Caco-2 (cell line): ENCODE measurements at regions of chr20 and their contacts with region 1.

Region 1: DNA sequence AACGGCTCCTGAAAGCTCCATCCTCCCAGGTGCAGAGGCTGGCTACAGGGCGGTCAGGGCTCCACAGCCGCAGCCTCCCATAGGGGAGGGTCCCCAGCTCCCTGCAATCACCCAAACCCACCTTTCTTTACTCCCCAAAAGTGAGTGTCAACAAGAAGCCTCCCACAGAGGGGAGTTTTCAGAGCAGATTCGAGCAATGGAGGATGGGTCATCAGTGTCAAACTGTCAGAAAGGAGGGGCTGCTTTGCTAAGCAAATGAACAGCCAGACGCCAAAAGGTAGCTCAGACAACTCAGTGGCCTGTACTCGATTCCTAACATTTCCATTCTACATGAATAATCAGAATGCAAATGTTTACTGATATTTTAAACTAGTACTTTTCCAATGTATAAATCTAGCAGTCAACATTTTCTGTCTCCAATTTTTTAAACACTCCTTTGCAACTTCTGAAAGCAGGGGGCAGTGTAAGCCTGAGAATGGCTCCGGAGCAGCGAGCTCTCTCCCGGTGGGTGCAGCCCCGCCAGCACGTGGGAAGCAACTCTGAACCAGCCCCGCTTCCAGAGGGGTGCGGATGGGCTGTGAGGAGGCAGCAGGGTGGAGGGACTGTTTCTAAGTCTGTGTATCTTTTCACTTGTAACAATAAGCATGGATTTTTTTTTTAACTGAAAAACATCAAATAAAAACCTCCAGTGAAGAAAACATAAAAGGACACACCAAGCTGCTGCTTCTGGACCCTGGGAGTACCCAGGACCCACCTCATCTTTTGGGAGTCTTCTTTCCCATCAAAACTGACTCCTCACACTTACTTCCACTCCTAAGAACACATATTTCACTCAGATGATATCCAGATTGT is 54.9 kb downstream of the TAF4 start:
- DNase-seq: peak in 1 of 2 experiments; percentile 82
- H3K4me3 ChIP-seq: no peak overlapping the region
- H3K4me3 Mint-ChIP-seq: no peak overlapping the region
- H3K27ac Mint-ChIP-seq: peak overlapping the region; percentile 5
- H3K4me1 ChIP-seq: no peaks in the 10 kb centered on the region
- H3K4me1 Mint-ChIP-seq: no peaks in the 10 kb centered on the region
- H3K27me3 ChIP-seq: no peaks in the 10 kb centered on the region
- H3K27me3 Mint-ChIP-seq: no peaks in the 10 kb centered on the region
- CTCF ChIP-seq: peak; percentile 88 to 93

Region 2: DNA sequence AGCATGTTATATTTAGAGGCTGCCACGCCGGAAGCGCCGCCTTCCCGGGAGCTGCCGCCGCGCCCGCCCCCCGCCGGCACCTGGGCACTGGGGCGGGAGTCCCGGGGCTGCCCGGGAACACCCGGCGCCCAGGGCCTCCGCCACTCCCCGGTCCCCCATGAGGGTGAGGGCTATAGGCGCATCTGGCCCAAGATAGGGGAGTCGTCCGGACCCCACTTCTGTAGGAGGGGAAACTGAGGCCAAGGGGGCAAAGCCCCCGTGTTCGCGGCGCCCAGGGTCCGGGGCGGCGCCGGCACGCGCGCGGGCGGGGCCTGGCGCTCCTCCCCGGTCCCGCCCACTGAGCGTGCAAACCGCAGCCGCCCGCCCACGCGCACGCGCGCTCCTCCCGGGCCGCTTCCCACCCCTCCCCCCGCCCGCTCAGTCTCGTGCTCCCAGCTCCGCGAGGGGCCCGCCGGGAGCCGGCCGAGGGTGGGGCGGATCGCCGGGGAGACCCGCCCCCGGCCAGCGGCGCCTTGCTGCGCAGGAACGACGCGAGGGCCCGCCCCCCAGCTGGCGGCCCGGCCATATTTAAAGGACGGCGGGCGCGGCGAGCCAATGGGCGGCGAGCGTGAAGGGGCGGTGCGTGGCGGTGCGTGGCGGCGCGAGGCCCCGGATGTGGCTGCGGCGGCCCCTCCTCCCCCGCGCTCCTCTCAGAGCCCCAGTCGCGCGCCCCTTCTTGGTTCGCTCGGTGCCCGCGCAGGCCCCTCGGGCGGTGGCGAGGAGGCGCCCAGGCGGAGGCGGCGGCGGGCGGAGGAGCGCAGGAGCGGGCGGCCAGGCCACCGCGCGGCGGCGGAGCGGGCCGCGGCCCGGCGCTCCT is 111.2 kb after region 1 on chr20 and contains the start of gene LSM14B:
- CTCF ChIA-PET with region 1: interaction called, 26 read pairs
- POLR2A ChIA-PET with region 1: interaction called, 8 read pairs
- intact Hi-C with region 1: loop called (anchors 5 kb)
- DNase-seq: peak; percentile 99 to 100
- H3K4me3 ChIP-seq: peak within 1 kb of the TSS; percentile 96
- H3K4me3 Mint-ChIP-seq: peak within 1 kb of the TSS; percentile 76
- H3K27ac Mint-ChIP-seq: peak within 1 kb of the TSS; percentile 65
- H3K4me1 ChIP-seq: peaks cover 19% of the 10 kb centered on the region
- H3K4me1 Mint-ChIP-seq: peaks cover 28% of the 10 kb centered on the region
- H3K27me3 ChIP-seq: no peaks in the 10 kb centered on the region
- H3K27me3 Mint-ChIP-seq: peaks cover 10% of the 10 kb centered on the region
- CTCF ChIP-seq: no peak
- total RNA-seq, gene LSM14B: 143 and 154 TPM in 2 replicates